ENCODE measurements at regions of chr6 and their contacts with region 1.

Region 1: DNA sequence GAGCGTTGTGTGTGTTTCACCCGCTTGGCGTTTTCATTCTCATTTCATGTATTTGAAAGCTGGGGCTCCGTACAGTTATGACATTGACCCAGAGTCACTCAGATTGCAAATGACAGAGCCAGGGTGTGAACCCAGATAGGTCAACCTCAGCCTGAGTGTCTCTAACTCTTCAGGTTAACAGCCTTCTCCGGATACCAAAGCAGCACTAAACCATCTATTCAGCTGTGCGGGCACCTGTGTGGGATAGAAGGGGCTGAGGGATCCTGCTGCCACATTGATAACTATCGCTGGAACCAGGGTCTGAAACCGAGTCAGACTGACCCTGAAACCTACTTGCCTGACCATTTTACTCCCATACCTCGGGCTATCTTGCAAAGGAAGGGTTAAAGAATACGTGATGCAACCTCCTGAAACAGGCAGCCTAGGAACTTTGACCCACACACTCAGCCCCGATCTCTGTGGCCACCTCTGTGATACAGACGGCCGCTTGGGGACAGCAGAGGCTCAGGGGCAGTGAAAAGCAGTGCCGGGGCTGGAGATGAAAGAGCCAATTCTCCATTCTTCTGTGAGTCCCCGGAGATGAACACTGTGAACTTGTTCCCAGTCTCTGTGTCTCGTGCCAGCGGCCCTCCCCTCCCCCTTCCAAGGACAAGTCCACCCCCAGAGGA is 233.5 kb upstream of the QKI start:
- DNase-seq: peak; percentile 75 to 90
- ATAC-seq: peak; percentile 93 to 96 (median 94)
- H3K4me3 ChIP-seq: peak overlapping the region; percentile 54
- H3K27ac ChIP-seq: peak overlapping the region; percentile 48
- H3K4me1 ChIP-seq: peaks cover 27% of the 10 kb centered on the region
- H3K27me3 ChIP-seq: no peaks in the 10 kb centered on the region
- CTCF ChIP-seq: peak; percentile 89

Region 2: DNA sequence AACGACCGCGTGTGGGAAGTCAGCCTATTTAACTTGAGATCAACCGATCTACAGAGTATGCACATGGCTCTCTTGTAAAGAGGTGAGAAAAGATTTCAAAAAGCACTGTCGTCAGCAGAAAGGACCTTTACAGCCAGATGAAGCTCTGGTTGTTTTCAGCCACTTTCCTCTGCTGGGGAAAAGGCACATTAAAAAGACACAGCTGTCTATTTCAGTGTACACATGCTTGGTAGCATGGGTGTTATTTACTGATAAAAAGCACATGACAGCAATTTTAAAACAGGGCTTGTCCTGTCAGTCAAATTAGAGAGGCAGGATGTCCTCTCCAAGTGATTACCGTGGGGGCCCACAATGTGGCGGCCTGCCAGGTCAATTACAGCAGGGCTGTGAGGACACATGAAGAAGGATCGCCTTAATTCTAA is 642.4 kb before region 1 on chr6:
- intact Hi-C with region 1: no loop called
- DNase-seq: peak; percentile 35 to 86
- ATAC-seq: peak; percentile 40 to 87 (median 69)
- H3K4me3 ChIP-seq: peak overlapping the region; percentile 8
- H3K27ac ChIP-seq: no peak overlapping the region
- H3K4me1 ChIP-seq: peaks cover 16% of the 10 kb centered on the region
- H3K27me3 ChIP-seq: no peaks in the 10 kb centered on the region
- CTCF ChIP-seq: no peak

Region 3: DNA sequence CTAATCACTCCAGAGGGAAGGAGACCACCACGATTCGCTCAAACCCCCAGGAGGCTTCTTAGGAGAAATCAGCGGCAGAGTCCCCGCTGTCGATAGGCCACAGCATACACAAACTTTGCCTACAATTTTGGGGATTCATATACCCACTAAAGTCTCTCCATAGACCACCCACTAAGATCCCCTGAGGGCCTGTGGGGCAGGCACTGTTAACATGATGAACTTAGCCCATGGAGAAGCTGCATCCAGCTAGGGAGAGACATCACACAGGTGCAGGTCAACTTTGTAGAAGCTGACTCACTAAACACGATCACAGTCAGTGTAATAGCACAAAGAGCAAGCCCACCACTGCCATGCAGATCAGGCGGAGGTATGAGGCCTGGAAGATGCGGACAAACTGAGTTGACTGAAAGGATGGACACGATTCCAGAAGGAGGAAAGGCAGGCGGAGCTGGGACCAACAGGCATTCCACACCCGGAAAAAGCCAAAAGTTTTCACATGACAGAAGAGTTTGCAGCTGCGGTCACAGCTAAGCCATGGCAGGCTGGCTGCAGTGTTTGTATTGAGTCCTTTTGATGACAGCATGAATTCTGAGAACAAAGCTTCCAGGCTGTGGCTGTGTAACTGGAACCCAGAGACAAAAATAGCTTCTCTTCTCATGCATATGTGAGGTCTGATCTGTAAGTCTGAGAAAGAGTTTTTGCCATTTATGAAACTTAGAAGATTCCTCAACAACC is 157.8 kb after region 1 on chr6:
- intact Hi-C with region 1: loop called (anchors 2 to 5 kb)
- DNase-seq: peak; percentile 56 to 78
- ATAC-seq: peak; percentile 79 to 83 (median 80)
- H3K4me3 ChIP-seq: peak overlapping the region; percentile 50
- H3K27ac ChIP-seq: peak overlapping the region; percentile 94
- H3K4me1 ChIP-seq: peaks cover 72% of the 10 kb centered on the region
- H3K27me3 ChIP-seq: no peaks in the 10 kb centered on the region
- CTCF ChIP-seq: no peak

Region 4: GRCh38 chr6:163565140-163565539 is 384.1 kb after region 1 on chr6:
- intact Hi-C with region 1: loop called in 1 of 2 experiments (anchors 10 kb)
- DNase-seq: no peak
- ATAC-seq: peak; percentile 54 to 81 (median 78)
- H3K4me3 ChIP-seq: no peak overlapping the region
- H3K27ac ChIP-seq: peak overlapping the region; percentile 60
- H3K4me1 ChIP-seq: peaks cover 59% of the 10 kb centered on the region
- H3K27me3 ChIP-seq: no peaks in the 10 kb centered on the region
- CTCF ChIP-seq: no peak

Region 5: GRCh38 chr6:164927288-164928056 is 1746.5 kb after region 1 on chr6:
- intact Hi-C with region 1: loop called in 1 of 2 experiments (anchors 10 kb)
- DNase-seq: peak; percentile 57 to 84
- ATAC-seq: peak; percentile 90 to 99 (median 96)
- H3K4me3 ChIP-seq: peak overlapping the region; percentile 52
- H3K27ac ChIP-seq: no peak overlapping the region
- H3K4me1 ChIP-seq: peaks cover 6% of the 10 kb centered on the region
- H3K27me3 ChIP-seq: no peaks in the 10 kb centered on the region
- CTCF ChIP-seq: peak; percentile 99